CD8-positive, alpha-beta T cell (primary cell): ENCODE measurements at regions of chr5 and their contacts with region 1.

Region 1: DNA sequence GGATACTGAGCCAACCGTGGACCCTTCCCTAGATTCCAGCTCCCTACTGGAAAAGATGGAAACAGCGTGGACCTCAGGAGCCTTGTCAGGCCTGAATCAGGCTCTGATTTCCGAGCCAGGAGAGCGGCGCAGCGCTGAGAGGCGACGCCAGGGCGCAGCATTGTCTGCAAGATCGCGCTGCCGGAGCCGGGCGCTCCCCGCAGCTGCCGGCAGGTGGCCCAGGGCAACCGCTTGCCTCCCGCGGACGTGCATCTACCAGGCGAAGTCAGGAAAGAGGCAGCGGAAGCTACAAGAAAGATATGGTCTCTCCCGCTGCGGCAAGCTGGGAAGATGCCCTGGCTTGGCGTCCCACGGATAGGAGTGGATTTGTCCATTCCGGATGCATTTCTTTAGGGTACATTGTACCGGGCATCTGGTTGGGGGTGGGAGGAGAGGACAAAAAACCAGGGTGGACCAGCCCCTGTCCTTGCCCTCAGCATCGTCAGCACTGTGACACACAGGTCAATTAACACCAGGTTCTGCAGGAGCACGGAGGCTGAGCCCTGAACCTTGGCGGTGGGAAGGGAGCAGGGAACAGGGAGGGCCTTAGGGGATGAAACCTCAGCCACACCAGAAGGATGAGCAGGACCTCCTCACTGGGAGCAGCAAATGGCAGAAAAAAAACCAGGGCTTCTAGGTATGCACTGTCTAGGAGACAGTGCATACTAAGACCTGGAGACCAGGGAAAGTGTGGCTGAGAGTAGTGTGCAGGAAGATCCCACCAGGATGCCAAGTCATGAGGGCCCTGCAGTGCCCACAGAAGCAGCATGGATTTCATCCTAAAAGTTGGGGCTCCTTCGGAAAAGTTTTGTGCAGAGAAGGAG is 55.9 kb downstream of the SFXN1 start:
- DNase-seq: peak; percentile 67 to 91 (median 79)
- ATAC-seq: peak; percentile 99
- H3K4me3 ChIP-seq: peak overlapping the region in 1 of 2 experiments; percentile 11
- H3K4me3 Mint-ChIP-seq: peak overlapping the region; percentile 69
- H3K27ac ChIP-seq: no peak overlapping the region
- H3K27ac Mint-ChIP-seq: no peak overlapping the region
- H3K4me1 ChIP-seq: peaks cover 16% of the 10 kb centered on the region
- H3K4me1 Mint-ChIP-seq: peaks cover 27% of the 10 kb centered on the region
- H3K27me3 ChIP-seq: no peaks in the 10 kb centered on the region
- H3K27me3 Mint-ChIP-seq: no peaks in the 10 kb centered on the region
- CTCF ChIP-seq: peak; percentile 100

Region 2: GRCh38 chr5:174106997-174107655 is 1427.2 kb before region 1 on chr5:
- CTCF ChIA-PET with region 1: no interaction called
- POLR2A ChIA-PET with region 1: no interaction called
- intact Hi-C with region 1: no loop called
- DNase-seq: no peak
- ATAC-seq: no peak
- H3K4me3 ChIP-seq: no peak overlapping the region
- H3K4me3 Mint-ChIP-seq: no peak overlapping the region
- H3K27ac ChIP-seq: no peak overlapping the region
- H3K27ac Mint-ChIP-seq: no peak overlapping the region
- H3K4me1 ChIP-seq: no peaks in the 10 kb centered on the region
- H3K4me1 Mint-ChIP-seq: no peaks in the 10 kb centered on the region
- H3K27me3 ChIP-seq: no peaks in the 10 kb centered on the region
- H3K27me3 Mint-ChIP-seq: peaks cover 7% of the 10 kb centered on the region
- CTCF ChIP-seq: no peak

Region 3: GRCh38 chr5:175478384-175479124 is 55.7 kb before region 1 on chr5 and contains the start of gene SFXN1:
- CTCF ChIA-PET with region 1: interaction called, 13 read pairs
- POLR2A ChIA-PET with region 1: interaction called, 3 read pairs
- intact Hi-C with region 1: no loop called
- DNase-seq: peak; percentile 43 to 89 (median 75)
- ATAC-seq: peak; percentile 32
- H3K4me3 ChIP-seq: peak within 1 kb of the TSS; percentile 74 to 80
- H3K4me3 Mint-ChIP-seq: peak within 1 kb of the TSS; percentile 96
- H3K27ac ChIP-seq: peak within 1 kb of the TSS; percentile 67 to 75
- H3K27ac Mint-ChIP-seq: peak within 1 kb of the TSS; percentile 97
- H3K4me1 ChIP-seq: peaks cover 48% of the 10 kb centered on the region
- H3K4me1 Mint-ChIP-seq: peaks cover 49% of the 10 kb centered on the region
- H3K27me3 ChIP-seq: no peaks in the 10 kb centered on the region
- H3K27me3 Mint-ChIP-seq: no peaks in the 10 kb centered on the region
- CTCF ChIP-seq: no peak
- total RNA-seq, gene SFXN1: 169 to 174 TPM

Region 4: DNA sequence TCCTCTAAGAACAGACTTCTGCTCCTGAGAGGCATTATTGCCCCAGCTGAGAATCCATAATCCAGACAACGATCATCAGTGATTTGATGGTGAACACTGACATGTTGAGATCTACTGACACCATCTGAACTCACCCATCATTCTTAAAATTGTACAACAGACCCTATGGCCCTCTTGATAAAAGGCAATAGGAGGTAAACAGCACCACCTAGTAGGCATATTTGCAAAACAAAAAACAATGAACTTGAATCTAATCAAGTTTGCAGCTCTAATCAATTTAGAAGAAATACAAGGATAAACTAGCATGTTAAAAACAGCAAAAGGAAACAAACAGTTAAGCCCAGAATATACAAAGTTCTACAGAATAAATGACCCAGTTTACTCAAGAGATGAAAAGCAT is 33.7 kb after region 1 on chr5:
- CTCF ChIA-PET with region 1: interaction called, 11 read pairs
- POLR2A ChIA-PET with region 1: interaction called, 3 read pairs
- intact Hi-C with region 1: loop called in 1 of 2 experiments (anchors 1 kb)
- DNase-seq: peak in 2 of 9 experiments; percentile 10 to 32
- ATAC-seq: no peak
- H3K4me3 ChIP-seq: no peak overlapping the region
- H3K4me3 Mint-ChIP-seq: no peak overlapping the region
- H3K27ac ChIP-seq: no peak overlapping the region
- H3K27ac Mint-ChIP-seq: no peak overlapping the region
- H3K4me1 ChIP-seq: no peaks in the 10 kb centered on the region
- H3K4me1 Mint-ChIP-seq: no peaks in the 10 kb centered on the region
- H3K27me3 ChIP-seq: peaks cover 0 to 3% of the 10 kb centered on the region in 2 experiments
- H3K27me3 Mint-ChIP-seq: peaks cover 4% of the 10 kb centered on the region
- CTCF ChIP-seq: no peak

Region 5: DNA sequence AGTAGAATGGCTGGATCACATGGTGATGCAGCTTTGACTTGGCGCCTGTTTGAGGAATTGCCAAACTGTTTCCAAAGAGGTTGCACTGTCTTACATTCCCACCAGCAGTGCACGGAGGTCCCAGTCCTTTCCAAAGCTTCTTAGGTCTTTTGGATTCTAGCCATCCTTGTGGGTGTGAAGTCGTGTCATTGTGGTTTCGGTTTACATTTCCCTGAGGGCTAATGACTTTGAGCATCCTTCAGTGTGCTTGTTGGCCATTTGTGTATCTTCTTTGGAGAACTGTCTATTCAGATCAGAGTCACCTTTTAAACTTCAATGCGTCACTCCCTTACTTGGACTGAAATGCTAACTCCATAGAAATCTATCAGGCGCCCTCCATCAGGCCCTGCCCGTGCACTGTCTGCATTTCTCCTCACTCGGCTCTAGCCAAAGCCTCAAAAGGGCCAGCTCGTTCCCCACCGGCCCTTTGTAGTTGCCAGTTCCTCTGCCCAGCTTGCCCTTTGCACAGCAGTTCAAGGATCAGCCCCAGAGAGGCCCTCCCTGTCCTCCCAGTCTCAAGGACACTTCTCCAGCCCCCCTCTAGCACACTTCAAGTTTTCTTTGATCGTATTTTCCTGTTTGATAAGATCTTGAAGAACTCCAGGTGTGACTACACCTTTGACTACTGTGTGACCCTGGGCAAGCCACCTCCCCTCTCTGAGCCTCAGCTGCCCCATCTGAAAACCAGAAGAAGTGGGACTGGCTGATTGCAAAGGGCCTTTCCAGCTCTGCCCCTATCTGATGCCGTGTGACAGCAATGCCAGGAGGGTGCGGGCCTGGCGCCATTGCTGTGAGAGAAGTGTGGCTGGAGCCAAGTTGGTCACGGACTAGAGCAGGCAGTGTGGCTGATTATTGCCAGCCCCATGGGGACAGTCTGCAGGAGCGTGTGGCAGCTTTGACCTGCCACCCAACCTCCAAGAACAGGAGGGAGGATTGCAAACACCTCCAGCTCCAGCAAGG is 129.2 kb after region 1 on chr5:
- CTCF ChIA-PET with region 1: interaction called, 20 read pairs
- POLR2A ChIA-PET with region 1: interaction called, 4 read pairs
- intact Hi-C with region 1: loop called (anchors 1 to 2 kb)
- DNase-seq: no peak
- ATAC-seq: no peak
- H3K4me3 ChIP-seq: no peak overlapping the region
- H3K4me3 Mint-ChIP-seq: no peak overlapping the region
- H3K27ac ChIP-seq: no peak overlapping the region
- H3K27ac Mint-ChIP-seq: no peak overlapping the region
- H3K4me1 ChIP-seq: peaks cover 30% of the 10 kb centered on the region
- H3K4me1 Mint-ChIP-seq: peaks cover 72% of the 10 kb centered on the region
- H3K27me3 ChIP-seq: peaks cover 0 to 1% of the 10 kb centered on the region in 2 experiments
- H3K27me3 Mint-ChIP-seq: no peaks in the 10 kb centered on the region
- CTCF ChIP-seq: no peak

Region 6: DNA sequence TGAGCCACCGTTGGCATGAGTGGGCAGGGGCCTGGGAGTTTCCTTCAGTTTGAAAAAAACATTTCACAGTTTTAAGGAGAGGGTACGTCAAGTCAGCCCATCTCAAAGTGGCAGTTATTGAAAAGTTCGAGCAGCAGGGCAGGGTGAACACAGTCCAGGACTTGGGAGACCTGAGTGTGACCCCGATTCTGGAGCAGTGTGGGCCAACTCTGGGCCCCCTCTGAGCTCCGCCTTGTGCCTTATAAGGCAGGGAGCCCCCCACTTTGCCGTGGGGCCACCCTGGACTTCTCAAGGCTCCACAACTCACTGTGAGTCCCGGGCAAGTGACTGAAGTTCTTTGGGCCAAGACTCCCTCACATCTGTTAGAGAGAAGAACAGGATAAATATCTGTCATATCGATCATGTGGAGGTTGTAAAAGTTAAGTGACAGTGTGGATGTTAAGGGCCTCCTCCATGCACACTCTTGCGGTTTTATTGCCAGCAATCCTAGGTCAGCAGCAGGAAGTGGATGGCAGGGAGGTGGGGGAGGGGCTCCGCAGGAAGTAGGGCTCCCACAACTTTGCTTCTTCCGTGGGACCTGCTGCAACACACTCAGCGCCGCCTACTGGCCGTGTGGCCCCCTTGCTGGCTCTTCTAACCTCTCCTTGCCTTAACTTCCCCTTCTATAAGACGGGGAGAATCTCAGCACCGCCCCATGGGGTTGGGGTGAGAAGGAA is 162.0 kb after region 1 on chr5:
- CTCF ChIA-PET with region 1: interaction called, 214 read pairs
- POLR2A ChIA-PET with region 1: interaction called, 3 read pairs
- intact Hi-C with region 1: loop called (anchors 1 kb)
- DNase-seq: peak; percentile 21 to 83 (median 71)
- ATAC-seq: peak; percentile 70
- H3K4me3 ChIP-seq: no peak overlapping the region
- H3K4me3 Mint-ChIP-seq: no peak overlapping the region
- H3K27ac ChIP-seq: no peak overlapping the region
- H3K27ac Mint-ChIP-seq: peak overlapping the region; percentile 76
- H3K4me1 ChIP-seq: peaks cover 11% of the 10 kb centered on the region
- H3K4me1 Mint-ChIP-seq: peaks cover 28% of the 10 kb centered on the region
- H3K27me3 ChIP-seq: no peaks in the 10 kb centered on the region
- H3K27me3 Mint-ChIP-seq: no peaks in the 10 kb centered on the region
- CTCF ChIP-seq: peak; percentile 57

Region 7: GRCh38 chr5:175718401-175719108 is 184.3 kb after region 1 on chr5:
- CTCF ChIA-PET with region 1: interaction called, 53 read pairs
- POLR2A ChIA-PET with region 1: no interaction called
- intact Hi-C with region 1: loop called (anchors 2 kb)
- DNase-seq: peak in 7 of 9 experiments; percentile 39 to 58 (median 51)
- ATAC-seq: peak; percentile 46
- H3K4me3 ChIP-seq: no peak overlapping the region
- H3K4me3 Mint-ChIP-seq: no peak overlapping the region
- H3K27ac ChIP-seq: no peak overlapping the region
- H3K27ac Mint-ChIP-seq: no peak overlapping the region
- H3K4me1 ChIP-seq: no peaks in the 10 kb centered on the region
- H3K4me1 Mint-ChIP-seq: no peaks in the 10 kb centered on the region
- H3K27me3 ChIP-seq: no peaks in the 10 kb centered on the region
- H3K27me3 Mint-ChIP-seq: no peaks in the 10 kb centered on the region
- CTCF ChIP-seq: peak; percentile 57

Region 8: DNA sequence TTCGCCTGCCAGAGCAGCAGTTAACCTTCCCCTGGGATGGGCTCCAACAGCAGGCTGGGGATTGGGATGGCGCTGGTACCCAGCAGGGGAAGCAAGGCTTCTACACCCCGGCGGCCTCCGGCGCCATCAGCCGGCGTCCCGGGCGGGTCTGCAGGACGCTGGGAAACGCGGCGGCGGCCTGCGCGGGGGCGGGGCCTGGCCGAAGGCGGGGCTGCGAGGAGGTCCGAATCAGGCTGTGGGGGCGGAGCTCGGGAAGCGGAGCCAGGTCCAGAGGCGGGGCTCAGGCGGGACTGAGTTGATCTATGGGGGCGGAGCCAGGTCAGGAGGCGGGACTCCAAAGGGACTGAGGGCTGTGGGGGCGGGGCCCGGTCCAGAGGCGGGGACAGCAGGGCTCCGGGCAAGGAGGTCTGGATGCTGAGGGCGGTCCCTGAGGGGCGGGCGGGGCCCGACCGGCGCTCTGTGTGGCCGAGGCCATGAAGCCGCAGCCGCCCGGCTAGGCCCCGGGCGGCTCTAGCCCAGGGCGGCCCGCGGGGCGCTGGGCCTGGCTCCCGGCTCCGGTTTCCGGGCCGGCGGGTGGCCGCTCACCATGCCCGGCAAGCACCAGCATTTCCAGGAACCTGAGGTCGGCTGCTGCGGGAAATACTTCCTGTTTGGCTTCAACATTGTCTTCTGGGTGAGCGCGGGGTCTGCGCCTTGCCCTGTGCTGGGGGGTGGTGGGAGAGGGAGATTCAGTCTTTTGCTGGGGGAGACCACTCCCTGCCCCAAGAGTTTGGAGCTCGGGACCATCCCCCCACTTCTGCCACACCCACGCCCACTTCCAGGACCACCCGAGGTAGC is 1112.9 kb after region 1 on chr5 and contains the start of gene TSPAN17:
- CTCF ChIA-PET with region 1: no interaction called
- POLR2A ChIA-PET with region 1: no interaction called
- intact Hi-C with region 1: loop called in 1 of 2 experiments (anchors 10 kb)
- DNase-seq: peak; percentile 93 to 99 (median 99)
- ATAC-seq: peak; percentile 89
- H3K4me3 ChIP-seq: peak within 1 kb of the TSS; percentile 66 to 67
- H3K4me3 Mint-ChIP-seq: peak within 1 kb of the TSS; percentile 89
- H3K27ac ChIP-seq: peak within 1 kb of the TSS; percentile 45 to 72
- H3K27ac Mint-ChIP-seq: peak within 1 kb of the TSS; percentile 90
- H3K4me1 ChIP-seq: peaks cover 50% of the 10 kb centered on the region
- H3K4me1 Mint-ChIP-seq: peaks cover 53% of the 10 kb centered on the region
- H3K27me3 ChIP-seq: no peaks in the 10 kb centered on the region
- H3K27me3 Mint-ChIP-seq: no peaks in the 10 kb centered on the region
- CTCF ChIP-seq: no peak
- total RNA-seq, gene TSPAN17: 9.5 to 9.8 TPM